Activated CD4-positive, alpha-beta T cell treated with anti-CD3 and anti-CD28 coated beads for 36 hours (primary cell): ENCODE measurements at regions of chr18 and their contacts with region 1.

Region 1: DNA sequence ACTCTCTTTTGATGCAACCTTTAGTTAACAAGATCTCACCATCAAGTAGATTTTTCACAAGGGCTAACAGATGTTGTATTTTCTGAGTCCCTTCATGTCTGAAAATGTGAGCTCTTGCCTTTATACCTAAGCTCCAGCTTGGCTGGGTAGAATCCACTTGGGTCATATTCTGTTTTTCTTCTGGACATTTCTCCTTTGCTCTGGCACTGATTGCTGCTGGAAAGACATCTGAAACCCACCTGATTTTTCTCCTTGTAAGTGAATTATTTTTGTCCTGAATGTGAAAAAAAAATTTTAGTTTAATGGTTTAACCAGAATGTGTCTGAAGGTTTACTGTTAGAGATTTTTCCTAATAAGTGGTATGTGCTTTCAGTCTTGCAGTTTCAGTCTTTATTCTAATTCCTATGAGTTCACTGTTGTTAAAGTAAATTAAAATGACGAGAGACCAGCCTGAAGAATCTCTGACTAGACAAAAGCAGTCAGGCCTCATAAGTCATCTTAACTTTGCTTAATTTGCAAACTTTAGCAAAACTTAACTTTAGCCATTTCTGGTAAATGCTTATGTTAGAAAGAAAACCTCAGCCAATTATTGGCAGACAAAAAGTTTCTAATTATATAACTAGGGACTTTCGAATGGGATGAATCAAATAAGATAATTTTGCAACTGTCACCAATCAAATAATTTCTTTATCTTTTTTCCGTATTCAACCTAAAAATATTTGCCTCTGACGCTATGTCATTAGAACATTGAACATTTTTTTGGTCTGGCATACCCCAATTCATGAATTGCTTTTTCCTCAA is 70.8 kb downstream of the ACAA2 start:
- DNase-seq: no peak
- ATAC-seq: no peak
- H3K4me3 Mint-ChIP-seq: no peak overlapping the region
- H3K27ac Mint-ChIP-seq: no peak overlapping the region
- H3K4me1 Mint-ChIP-seq: no peaks in the 10 kb centered on the region
- H3K27me3 Mint-ChIP-seq: peaks cover 1% of the 10 kb centered on the region

Region 2: DNA sequence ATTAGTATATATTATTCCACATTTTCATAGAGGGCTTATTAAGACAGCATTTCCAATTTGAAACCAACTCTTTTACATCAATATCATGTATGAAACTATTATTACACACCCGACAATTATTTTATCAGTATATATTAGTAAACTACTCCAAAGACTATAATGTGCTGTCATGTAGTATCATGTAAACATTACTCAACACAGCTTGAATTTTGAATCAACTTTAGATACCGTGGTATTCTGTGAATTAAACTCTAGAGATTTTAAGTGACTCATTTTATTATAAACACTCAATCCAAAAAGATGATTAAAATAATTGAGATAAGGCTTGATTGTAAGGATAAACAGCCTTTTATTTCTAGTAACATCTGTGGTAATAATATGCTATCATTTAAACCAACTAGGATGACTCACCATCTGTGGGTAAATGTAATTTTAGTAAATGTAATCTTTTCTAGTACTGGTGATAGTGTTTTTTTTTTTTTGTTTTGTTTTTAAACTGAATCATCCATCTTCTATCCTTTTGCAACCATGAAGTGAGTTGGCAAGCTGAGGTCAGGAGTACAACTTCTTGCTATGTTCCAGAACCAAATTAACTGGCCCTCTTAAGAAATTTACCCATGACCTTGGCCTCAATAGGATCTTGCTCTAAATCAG is 647.4 kb before region 1 on chr18:
- CTCF ChIA-PET with region 1: no interaction called
- POLR2A ChIA-PET with region 1: no interaction called
- intact Hi-C with region 1: loop called in 1 of 2 experiments (anchors 5 kb)
- DNase-seq: no peak
- ATAC-seq: peak; percentile 36
- H3K4me3 Mint-ChIP-seq: no peak overlapping the region
- H3K27ac Mint-ChIP-seq: no peak overlapping the region
- H3K4me1 Mint-ChIP-seq: peaks cover 4% of the 10 kb centered on the region
- H3K27me3 Mint-ChIP-seq: no peaks in the 10 kb centered on the region

Region 3: GRCh38 chr18:49778971-49779461 is 36.5 kb after region 1 on chr18:
- CTCF ChIA-PET with region 1: no interaction called
- POLR2A ChIA-PET with region 1: no interaction called
- intact Hi-C with region 1: no loop called
- DNase-seq: no peak
- ATAC-seq: no peak
- H3K4me3 Mint-ChIP-seq: no peak overlapping the region
- H3K27ac Mint-ChIP-seq: no peak overlapping the region
- H3K4me1 Mint-ChIP-seq: no peaks in the 10 kb centered on the region
- H3K27me3 Mint-ChIP-seq: no peaks in the 10 kb centered on the region